ENCODE measurements at regions of chr3 and their contacts with region 1.

Region 1: GRCh38 chr3:98602078-98602678 is 8.8 kb upstream of the CPOX start:
- DNase-seq: no peak
- H3K4me3 Mint-ChIP-seq: no peak overlapping the region
- H3K27ac Mint-ChIP-seq: no peak overlapping the region
- H3K4me1 Mint-ChIP-seq: no peaks in the 10 kb centered on the region
- H3K27me3 Mint-ChIP-seq: peaks cover 16% of the 10 kb centered on the region

Region 2: DNA sequence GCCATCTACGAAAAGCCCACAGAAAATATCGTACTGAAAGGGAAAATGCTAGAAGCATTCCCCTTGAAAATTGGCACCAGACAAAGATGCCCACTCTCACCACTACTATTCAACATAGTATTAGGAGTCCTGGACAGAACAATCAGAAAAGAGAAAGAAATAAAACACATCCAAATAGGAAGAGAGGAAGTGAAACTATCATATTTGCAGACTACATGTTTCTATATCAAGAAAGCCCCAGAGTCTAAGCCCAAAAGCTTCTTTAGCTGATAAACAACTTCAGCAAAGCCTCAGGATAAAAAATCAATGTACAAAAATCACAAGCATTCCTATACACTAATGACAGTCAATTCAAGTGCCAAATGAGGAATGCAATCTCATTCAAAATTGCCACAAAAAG is 196.1 kb before region 1 on chr3:
- CTCF ChIA-PET with region 1: no interaction called
- POLR2A ChIA-PET with region 1: no interaction called
- DNase-seq: no peak
- H3K4me3 Mint-ChIP-seq: no peak overlapping the region
- H3K27ac Mint-ChIP-seq: no peak overlapping the region
- H3K4me1 Mint-ChIP-seq: no peaks in the 10 kb centered on the region
- H3K27me3 Mint-ChIP-seq: peaks cover 10% of the 10 kb centered on the region

Region 3: DNA sequence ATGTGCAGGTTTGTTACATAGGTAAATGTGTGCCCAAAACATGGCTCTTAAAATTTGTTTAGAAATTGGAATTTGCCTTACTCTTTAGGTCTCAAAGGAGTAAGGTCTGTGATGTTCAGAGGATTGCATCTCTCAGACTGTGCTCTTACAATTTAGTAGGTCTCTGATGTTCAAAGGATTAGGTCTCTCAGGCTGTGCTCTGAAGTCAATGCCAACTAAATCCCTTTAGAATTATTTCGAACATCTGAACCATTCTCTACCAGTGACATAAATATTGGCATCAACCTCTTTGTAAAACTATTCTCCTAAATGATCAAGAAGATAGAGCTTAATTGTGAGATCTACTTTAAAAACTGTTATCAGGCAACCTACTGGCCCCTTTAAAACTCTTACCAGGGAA is 139.3 kb before region 1 on chr3 and contains the start of gene OR5K1:
- CTCF ChIA-PET with region 1: no interaction called
- POLR2A ChIA-PET with region 1: no interaction called
- DNase-seq: no peak
- H3K4me3 Mint-ChIP-seq: no peak within 1 kb of the TSS
- H3K27ac Mint-ChIP-seq: no peak within 1 kb of the TSS
- H3K4me1 Mint-ChIP-seq: no peaks in the 10 kb centered on the region
- H3K27me3 Mint-ChIP-seq: no peaks in the 10 kb centered on the region
- total RNA-seq, gene OR5K1: not detected

Region 4: DNA sequence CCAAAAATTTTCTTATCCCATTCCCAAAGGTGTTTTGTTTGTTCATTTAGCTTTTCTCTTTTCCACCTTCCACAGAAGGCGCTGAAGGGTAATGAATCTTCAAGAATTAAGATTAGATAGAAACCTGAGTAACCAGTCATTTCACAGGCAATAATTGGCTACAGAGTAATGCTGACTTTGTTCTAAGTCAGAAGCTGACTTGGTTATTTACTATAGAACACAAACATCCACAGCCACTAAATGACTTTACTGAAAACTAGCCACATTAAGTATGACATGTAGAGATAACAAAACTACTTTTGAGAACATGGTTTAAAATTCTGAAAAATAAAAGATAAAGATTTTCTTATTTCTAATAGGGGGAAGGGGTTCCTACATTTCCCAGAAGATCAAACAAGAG is 87.2 kb before region 1 on chr3:
- CTCF ChIA-PET with region 1: no interaction called
- POLR2A ChIA-PET with region 1: no interaction called
- DNase-seq: no peak
- H3K4me3 Mint-ChIP-seq: no peak overlapping the region
- H3K27ac Mint-ChIP-seq: no peak overlapping the region
- H3K4me1 Mint-ChIP-seq: peaks cover 76% of the 10 kb centered on the region
- H3K27me3 Mint-ChIP-seq: no peaks in the 10 kb centered on the region

Region 5: GRCh38 chr3:98657457-98657856 is 55.3 kb after region 1 on chr3:
- CTCF ChIA-PET with region 1: interaction called, 17 read pairs
- POLR2A ChIA-PET with region 1: interaction called, 3 read pairs
- DNase-seq: peak; percentile 51
- H3K4me3 Mint-ChIP-seq: no peak overlapping the region
- H3K27ac Mint-ChIP-seq: no peak overlapping the region
- H3K4me1 Mint-ChIP-seq: peaks cover 2% of the 10 kb centered on the region
- H3K27me3 Mint-ChIP-seq: peaks cover 22% of the 10 kb centered on the region

Region 6: DNA sequence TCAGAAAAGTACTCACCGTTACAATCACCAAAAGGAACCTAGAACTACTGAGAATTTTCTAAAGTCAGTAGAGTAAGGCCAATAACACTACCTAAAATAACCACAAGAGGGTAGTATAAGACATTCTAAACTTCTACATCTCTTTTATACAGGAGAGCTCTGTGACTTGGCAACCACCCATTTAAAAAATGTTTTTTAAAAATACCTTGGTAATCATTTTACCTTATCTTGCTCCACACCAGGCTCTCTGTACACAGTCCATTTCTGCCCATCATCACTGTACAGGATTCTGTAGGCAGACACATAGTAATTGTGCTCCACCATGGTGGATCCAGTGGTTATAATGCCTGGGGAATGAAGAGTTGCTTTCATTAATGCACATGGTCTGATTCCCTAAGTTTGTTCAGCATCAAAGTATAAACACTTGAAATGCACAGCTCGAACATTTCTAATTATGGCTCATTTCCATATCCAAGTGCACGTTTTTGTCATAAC is 215.4 kb after region 1 on chr3:
- CTCF ChIA-PET with region 1: interaction called, 14 read pairs
- POLR2A ChIA-PET with region 1: interaction called, 3 read pairs
- DNase-seq: no peak
- H3K4me3 Mint-ChIP-seq: no peak overlapping the region
- H3K27ac Mint-ChIP-seq: no peak overlapping the region
- H3K4me1 Mint-ChIP-seq: no peaks in the 10 kb centered on the region
- H3K27me3 Mint-ChIP-seq: no peaks in the 10 kb centered on the region

Measured in activated CD4-positive, alpha-beta memory T cell treated with anti-CD3 and anti-CD28 coated beads, Interleukin-2, amount 10 ng/mL, durations not matched to agents 7 days and 5 days (primary cell).